ENCODE measurements at regions of chr4 and their contacts with region 1.

Region 1: GRCh38 chr4:68175562-68176155 is 46.0 kb upstream of the TMPRSS11F start:
- DNase-seq: peak in 1 of 2 donors; percentile 16
- ATAC-seq: peak in 2 of 8 donors; percentile 20 to 55
- H3K4me3 ChIP-seq: no peak overlapping the region
- H3K27ac ChIP-seq: no peak overlapping the region
- H3K4me1 ChIP-seq: no peaks in the 10 kb centered on the region
- H3K27me3 ChIP-seq: no peaks in the 10 kb centered on the region
- CTCF ChIP-seq: peak in 8 of 9 donors; percentile 21 to 65 (median 54)

Region 2: GRCh38 chr4:67545199-67546003 is 630.3 kb before region 1 on chr4 and contains the start of gene CENPC:
- intact Hi-C with region 1: loop called in 1 of 10 experiments (anchors 5 kb)
- DNase-seq: peak; percentile 96 to 97
- ATAC-seq: peak; percentile 99 to 100 (median 100)
- H3K4me3 ChIP-seq: peak within 1 kb of the TSS; percentile 48 to 92 (median 79)
- H3K27ac ChIP-seq: peak within 1 kb of the TSS; percentile 28 to 98 (median 90)
- H3K4me1 ChIP-seq: peaks cover 0 to 39% (median 25%) of the 10 kb centered on the region in 9 donors
- H3K27me3 ChIP-seq: no peaks in the 10 kb centered on the region
- CTCF ChIP-seq: no peak
- total RNA-seq, gene CENPC: 7.0 to 12.9 (median 11.5) TPM

Region 3: GRCh38 chr4:67746797-67747495 is 428.7 kb before region 1 on chr4:
- intact Hi-C with region 1: loop called in 3 of 10 experiments (anchors 10 kb)
- DNase-seq: no peak
- ATAC-seq: no peak
- H3K4me3 ChIP-seq: no peak overlapping the region
- H3K27ac ChIP-seq: no peak overlapping the region
- H3K4me1 ChIP-seq: peaks cover 0 to 3% (median 0%) of the 10 kb centered on the region in 9 donors
- H3K27me3 ChIP-seq: no peaks in the 10 kb centered on the region
- CTCF ChIP-seq: peak; percentile 26 to 76 (median 70)

Region 4: GRCh38 chr4:67871867-67872266 is 303.8 kb before region 1 on chr4:
- intact Hi-C with region 1: loop called in 1 of 10 experiments (anchors 5 kb)
- DNase-seq: no peak
- ATAC-seq: peak in 1 of 8 donors; percentile 46
- H3K4me3 ChIP-seq: no peak overlapping the region
- H3K27ac ChIP-seq: no peak overlapping the region
- H3K4me1 ChIP-seq: no peaks in the 10 kb centered on the region
- H3K27me3 ChIP-seq: no peaks in the 10 kb centered on the region
- CTCF ChIP-seq: peak in 5 of 9 donors; percentile 15 to 44 (median 28)

Region 5: DNA sequence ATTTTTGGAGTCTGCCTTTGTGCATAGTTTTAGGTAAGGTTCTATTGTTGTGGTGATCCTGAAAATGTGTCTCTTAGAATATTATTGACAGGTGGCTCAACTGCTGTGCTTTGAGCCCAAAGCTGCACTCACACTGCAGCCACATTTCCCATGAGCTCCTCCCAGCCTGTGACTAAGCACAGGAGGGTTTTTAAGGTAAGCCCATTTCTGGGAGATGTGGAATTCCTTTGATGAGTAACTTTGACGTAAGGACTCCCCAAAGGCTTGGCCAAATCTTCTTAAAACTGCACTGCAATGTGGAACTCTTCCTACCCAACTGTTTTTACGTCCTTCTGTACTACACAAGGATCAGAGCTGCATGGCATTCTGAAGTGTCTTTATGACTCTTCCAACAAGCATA is 192.3 kb before region 1 on chr4:
- intact Hi-C with region 1: loop called in 3 of 10 experiments (anchors 5 to 10 kb)
- DNase-seq: no peak
- ATAC-seq: no peak
- H3K4me3 ChIP-seq: no peak overlapping the region
- H3K27ac ChIP-seq: no peak overlapping the region
- H3K4me1 ChIP-seq: no peaks in the 10 kb centered on the region
- H3K27me3 ChIP-seq: peaks cover 0 to 2% (median 0%) of the 10 kb centered on the region in 7 donors
- CTCF ChIP-seq: no peak

Region 6: GRCh38 chr4:67988991-67989390 is 186.7 kb before region 1 on chr4:
- intact Hi-C with region 1: loop called in 4 of 10 experiments (anchors 5 to 10 kb)
- DNase-seq: no peak
- ATAC-seq: no peak
- H3K4me3 ChIP-seq: no peak overlapping the region
- H3K27ac ChIP-seq: no peak overlapping the region
- H3K4me1 ChIP-seq: no peaks in the 10 kb centered on the region
- H3K27me3 ChIP-seq: peaks cover 0 to 4% (median 0%) of the 10 kb centered on the region in 7 donors
- CTCF ChIP-seq: no peak

Region 7: DNA sequence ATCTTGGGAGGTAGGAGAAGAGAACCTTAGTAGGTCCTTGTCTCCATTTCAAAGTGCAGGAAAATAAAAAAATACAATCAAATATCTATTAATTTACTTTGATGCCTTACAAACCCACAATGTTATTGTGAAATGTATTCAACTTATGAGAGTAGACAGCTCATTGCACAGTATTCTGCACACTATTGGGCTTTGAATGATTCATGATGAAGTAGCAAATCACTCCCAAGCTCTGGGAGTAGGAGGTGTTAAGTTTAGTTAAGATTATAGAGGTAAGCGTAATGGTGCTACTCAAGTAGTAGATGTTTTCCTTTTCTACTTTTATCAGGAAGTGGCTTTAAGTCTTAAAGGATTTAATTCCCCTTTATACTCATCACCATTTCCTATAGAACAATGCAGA is 179.5 kb before region 1 on chr4:
- intact Hi-C with region 1: loop called in 1 of 10 experiments (anchors 10 kb)
- DNase-seq: no peak
- ATAC-seq: no peak
- H3K4me3 ChIP-seq: no peak overlapping the region
- H3K27ac ChIP-seq: no peak overlapping the region
- H3K4me1 ChIP-seq: no peaks in the 10 kb centered on the region
- H3K27me3 ChIP-seq: no peaks in the 10 kb centered on the region
- CTCF ChIP-seq: no peak

Region 8: GRCh38 chr4:68349649-68350360 is 174.1 kb after region 1 on chr4 and contains the start of gene YTHDC1:
- intact Hi-C with region 1: no loop called
- DNase-seq: peak; percentile 96 to 98
- ATAC-seq: peak; percentile 99 to 100 (median 99)
- H3K4me3 ChIP-seq: peak within 1 kb of the TSS; percentile 61 to 94 (median 88)
- H3K27ac ChIP-seq: peak within 1 kb of the TSS; percentile 90 to 100 (median 96)
- H3K4me1 ChIP-seq: peaks cover 5 to 47% (median 38%) of the 10 kb centered on the region in 9 donors
- H3K27me3 ChIP-seq: peaks cover 0 to 7% (median 0%) of the 10 kb centered on the region in 7 donors
- CTCF ChIP-seq: peak in 1 of 9 donors; percentile 10
- total RNA-seq, gene YTHDC1: 42.4 to 65.0 (median 52.4) TPM

Region 9: GRCh38 chr4:68535974-68536373 is 360.3 kb after region 1 on chr4:
- intact Hi-C with region 1: no loop called
- DNase-seq: no peak
- ATAC-seq: no peak
- H3K4me3 ChIP-seq: no peak overlapping the region
- H3K27ac ChIP-seq: no peak overlapping the region
- H3K4me1 ChIP-seq: no peaks in the 10 kb centered on the region
- H3K27me3 ChIP-seq: no peaks in the 10 kb centered on the region
- CTCF ChIP-seq: no peak